PC-9 (cell line): ENCODE measurements at regions of chr17 and their contacts with region 1.

Region 1: DNA sequence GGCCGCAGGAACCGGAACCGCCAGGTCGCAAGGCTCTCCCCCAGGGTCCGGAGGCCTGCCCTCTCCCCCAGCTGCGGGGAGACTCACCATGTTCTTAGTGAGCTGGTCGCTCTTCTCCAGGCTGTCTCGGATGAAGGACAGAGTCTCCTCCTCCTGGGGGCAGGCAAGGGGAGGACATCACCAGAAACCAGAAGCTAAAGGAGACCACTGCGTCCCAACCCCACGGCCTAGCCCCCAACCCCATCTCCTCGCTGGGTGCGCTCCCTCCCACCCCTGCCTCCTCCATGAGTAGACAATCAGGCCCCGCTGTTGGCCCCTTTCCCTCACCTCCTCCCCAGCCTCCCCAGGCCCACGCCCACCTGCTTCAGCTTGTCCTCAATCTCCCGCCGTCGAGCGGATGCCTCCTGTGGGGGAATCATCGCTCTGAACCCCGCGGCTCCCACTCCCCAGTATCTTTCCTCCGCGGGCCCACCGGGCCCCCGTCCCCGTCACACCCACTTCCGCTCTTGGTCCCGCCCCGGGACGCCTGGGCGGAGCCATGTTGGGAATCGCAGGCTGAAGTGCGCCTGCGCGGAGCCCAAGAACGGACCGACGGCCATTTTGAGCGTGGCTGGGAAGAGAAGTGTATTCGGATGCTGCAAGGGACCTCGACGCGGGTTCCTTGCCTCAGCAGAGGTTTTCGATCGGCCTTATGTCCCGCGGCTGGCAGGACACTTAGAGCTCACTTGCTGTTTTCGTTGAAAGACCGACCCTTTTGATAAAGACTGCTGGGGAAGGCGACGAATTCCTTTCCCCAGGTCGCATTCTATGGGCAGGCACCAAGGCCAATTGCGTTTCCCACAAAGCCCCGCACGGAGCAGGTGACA is at the start of gene EXOC7:
- DNase-seq: peak; percentile 69 to 92
- H3K4me3 ChIP-seq: peak within 1 kb of the TSS; percentile 86
- H3K27ac ChIP-seq: peak within 1 kb of the TSS; percentile 73
- H3K4me1 ChIP-seq: peaks cover 7% of the 10 kb centered on the region
- H3K27me3 ChIP-seq: no peaks in the 10 kb centered on the region
- CTCF ChIP-seq: no peak; the same call in 1 of the 2 replicates
- total RNA-seq, gene EXOC7: 118 and 131 TPM in 2 replicates

Region 2: GRCh38 chr17:76072148-76072858 is 31.2 kb before region 1 on chr17 and contains the start of gene SRP68:
- CTCF ChIA-PET with region 1: no interaction called
- POLR2A ChIA-PET with region 1: interaction called, 20 read pairs
- intact Hi-C with region 1: no loop called
- DNase-seq: peak; percentile 72 to 90
- H3K4me3 ChIP-seq: peak within 1 kb of the TSS; percentile 83
- H3K27ac ChIP-seq: peak within 1 kb of the TSS; percentile 45
- H3K4me1 ChIP-seq: peaks cover 9% of the 10 kb centered on the region; the same call in 1 of the 2 replicates
- H3K27me3 ChIP-seq: no peaks in the 10 kb centered on the region; the same call in 1 of the 2 replicates
- CTCF ChIP-seq: no peak
- total RNA-seq, gene SRP68: 69.7 and 91.7 TPM in 2 replicates

Region 3: GRCh38 chr17:76171706-76172105 is 68.2 kb after region 1 on chr17:
- CTCF ChIA-PET with region 1: interaction called, 18 read pairs
- POLR2A ChIA-PET with region 1: no interaction called
- intact Hi-C with region 1: no loop called
- DNase-seq: no peak
- H3K4me3 ChIP-seq: no peak overlapping the region
- H3K27ac ChIP-seq: no peak overlapping the region
- H3K4me1 ChIP-seq: no peaks in the 10 kb centered on the region
- H3K27me3 ChIP-seq: no peaks in the 10 kb centered on the region
- CTCF ChIP-seq: no peak